Common myeloid progenitor, CD34-positive (primary cell): ENCODE measurements at regions of chr3 and their contacts with region 1.

Region 1: GRCh38 chr3:9731206-9732079 is at the start of gene BRPF1:
- DNase-seq: peak; percentile 99 to 100 (median 100)
- H3K4me3 ChIP-seq: peak within 1 kb of the TSS; percentile 76 to 97 (median 88)
- H3K27ac ChIP-seq: peak within 1 kb of the TSS; percentile 99 to 100
- H3K4me1 ChIP-seq: peaks cover 6 to 57% (median 42%) of the 10 kb centered on the region in 4 experiments
- H3K27me3 ChIP-seq: no peaks in the 10 kb centered on the region

Region 2: GRCh38 chr3:9715764-9716437 is 15.5 kb before region 1 on chr3:
- CTCF ChIA-PET with region 1: interaction called, 107 read pairs
- POLR2A ChIA-PET with region 1: interaction called, 5 read pairs
- DNase-seq: peak; percentile 89 to 92 (median 91)
- H3K4me3 ChIP-seq: no peak overlapping the region
- H3K27ac ChIP-seq: peak overlapping the region; percentile 23 to 56
- H3K4me1 ChIP-seq: peaks cover 2 to 17% (median 15%) of the 10 kb centered on the region in 4 experiments
- H3K27me3 ChIP-seq: no peaks in the 10 kb centered on the region

Region 3: DNA sequence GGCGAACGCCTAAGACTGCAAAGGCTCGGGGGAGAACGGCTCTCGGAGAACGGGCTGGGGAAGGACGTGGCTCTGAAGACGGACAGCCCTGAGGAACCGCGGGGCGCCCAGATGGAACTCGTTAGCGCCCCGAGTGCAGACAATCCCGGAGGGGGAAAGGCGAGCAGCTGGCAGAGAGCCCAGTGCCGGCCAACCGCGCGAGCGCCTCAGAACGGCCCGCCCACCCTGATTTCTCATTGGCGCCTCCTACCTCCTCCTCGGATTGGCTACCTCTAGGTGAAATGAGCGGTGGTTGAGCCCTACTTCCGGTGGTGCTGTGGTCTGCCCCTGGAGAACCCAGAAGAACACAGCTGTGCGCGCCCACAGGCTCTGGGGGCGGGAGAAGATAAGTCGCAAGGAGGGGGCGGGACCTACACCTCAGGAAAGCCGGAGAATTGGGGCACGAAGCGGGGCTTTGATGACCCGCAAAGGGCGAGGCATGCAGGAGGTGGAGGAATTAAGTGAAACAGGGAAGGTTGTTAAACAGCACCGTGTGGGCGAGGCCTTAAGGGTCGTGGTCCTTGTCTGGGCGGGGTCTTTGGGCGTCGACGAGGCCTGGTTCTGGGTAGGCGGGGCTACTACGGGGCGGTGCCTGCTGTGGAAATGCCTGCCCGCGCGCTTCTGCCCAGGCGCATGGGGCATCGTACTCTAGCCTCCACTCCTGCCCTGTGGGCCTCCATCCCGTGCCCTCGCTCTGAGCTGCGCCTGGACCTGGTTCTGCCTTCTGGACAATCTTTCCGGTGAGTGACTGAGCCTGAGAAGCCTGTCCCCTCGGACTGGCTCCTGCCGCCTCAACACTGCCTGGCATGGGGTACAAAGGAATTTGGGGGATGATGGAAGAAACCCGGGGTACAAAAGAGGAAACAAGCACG is 18.5 kb after region 1 on chr3 and contains the start of gene OGG1:
- CTCF ChIA-PET with region 1: interaction called, 68 read pairs
- POLR2A ChIA-PET with region 1: interaction called, 16 read pairs
- DNase-seq: peak; percentile 98 to 99 (median 99)
- H3K4me3 ChIP-seq: peak within 1 kb of the TSS; percentile 61 to 89 (median 75)
- H3K27ac ChIP-seq: peak within 1 kb of the TSS; percentile 25 to 67
- H3K4me1 ChIP-seq: peaks cover 0 to 34% (median 19%) of the 10 kb centered on the region in 4 experiments
- H3K27me3 ChIP-seq: no peaks in the 10 kb centered on the region

Region 4: DNA sequence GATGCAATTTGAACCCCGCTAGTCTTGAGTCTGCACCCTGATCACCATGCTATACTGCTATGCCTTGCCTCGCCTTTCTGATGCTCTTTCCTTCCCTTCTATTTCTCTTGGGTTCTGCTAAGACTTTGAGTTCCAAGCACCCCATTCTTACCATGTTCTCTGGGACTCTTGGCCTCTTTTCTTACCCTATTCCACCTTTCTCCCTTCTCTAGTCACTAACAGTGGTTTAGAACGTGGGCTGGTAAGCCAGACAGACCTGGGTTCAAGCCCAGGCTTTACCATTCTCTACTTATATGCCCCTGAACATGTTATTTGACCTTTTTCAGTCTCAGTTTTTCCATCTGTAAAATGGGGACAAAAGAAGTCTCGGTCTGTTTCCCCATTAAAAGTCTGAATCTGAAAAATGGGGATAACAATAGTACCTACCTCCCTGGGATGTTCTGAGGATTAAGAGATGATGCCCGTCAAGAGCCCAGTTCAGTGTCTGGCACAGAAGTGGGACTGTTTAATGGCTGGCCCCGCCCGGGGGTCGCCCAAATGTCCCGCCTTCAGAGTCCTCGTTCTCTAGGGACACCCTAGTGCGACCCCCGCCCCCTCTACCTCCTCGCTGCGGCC is 60.5 kb after region 1 on chr3:
- CTCF ChIA-PET with region 1: interaction called, 10 read pairs
- POLR2A ChIA-PET with region 1: interaction called, 7 read pairs
- DNase-seq: no peak
- H3K4me3 ChIP-seq: peak overlapping the region; percentile 79 to 98 (median 86)
- H3K27ac ChIP-seq: peak overlapping the region; percentile 96 to 98
- H3K4me1 ChIP-seq: peaks cover 11 to 27% (median 21%) of the 10 kb centered on the region in 4 experiments
- H3K27me3 ChIP-seq: no peaks in the 10 kb centered on the region

Region 5: DNA sequence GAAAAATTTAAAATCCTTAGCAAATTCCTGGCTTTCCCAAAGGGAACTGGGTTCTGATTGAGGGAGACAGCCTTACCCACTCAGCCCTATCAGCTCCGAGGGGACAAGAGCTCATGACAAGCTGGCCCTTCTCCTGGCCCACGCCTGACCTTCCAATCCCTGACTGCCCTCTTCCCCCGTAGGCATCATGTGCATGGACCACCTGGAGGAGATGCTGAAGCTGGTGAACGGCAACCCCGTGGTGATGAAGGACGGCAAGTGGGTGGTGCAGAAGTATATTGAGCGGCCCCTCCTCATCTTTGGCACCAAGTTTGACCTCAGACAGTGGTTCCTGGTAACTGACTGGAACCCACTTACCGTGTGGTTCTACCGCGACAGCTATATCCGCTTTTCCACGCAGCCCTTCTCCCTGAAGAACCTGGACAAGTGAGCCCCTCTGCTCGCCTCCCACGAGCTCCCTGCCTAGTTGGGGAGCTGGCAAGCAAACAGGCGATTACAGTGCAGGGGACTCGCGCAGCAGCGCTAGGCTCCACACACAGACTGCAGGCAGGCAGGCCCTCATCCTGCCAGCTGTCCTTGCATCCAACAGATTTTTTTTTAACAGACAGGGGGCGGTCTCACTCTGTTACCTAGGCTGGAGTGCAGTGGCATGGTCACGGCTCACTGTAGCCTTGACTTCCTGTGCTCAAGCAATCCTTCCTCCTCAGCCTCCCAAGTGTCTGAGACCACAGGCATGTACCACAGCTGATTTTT is 95.5 kb after region 1 on chr3:
- CTCF ChIA-PET with region 1: no interaction called
- POLR2A ChIA-PET with region 1: no interaction called
- DNase-seq: peak in 2 of 3 donors; percentile 45 to 57
- H3K4me3 ChIP-seq: no peak overlapping the region
- H3K27ac ChIP-seq: no peak overlapping the region
- H3K4me1 ChIP-seq: peaks cover 0 to 3% (median 1%) of the 10 kb centered on the region in 4 experiments
- H3K27me3 ChIP-seq: no peaks in the 10 kb centered on the region